Dendritic cell treated with granulocyte-macrophage colony-stimulating factor and Interleukin-4, amounts not matched to agents 40 ng/mL and 50 ng/mL, for 4 days (primary cell): ENCODE measurements at regions of chr13 and their contacts with region 1.

Region 1: GRCh38 chr13:20337884-20338551 is 105.9 kb upstream of the GJB6 start:
- H3K4me3 Mint-ChIP-seq: peak overlapping the region; percentile 20
- H3K27ac Mint-ChIP-seq: peak overlapping the region; percentile 59
- H3K4me1 Mint-ChIP-seq: peaks cover 51% of the 10 kb centered on the region
- H3K27me3 Mint-ChIP-seq: peaks cover 13% of the 10 kb centered on the region

Region 2: DNA sequence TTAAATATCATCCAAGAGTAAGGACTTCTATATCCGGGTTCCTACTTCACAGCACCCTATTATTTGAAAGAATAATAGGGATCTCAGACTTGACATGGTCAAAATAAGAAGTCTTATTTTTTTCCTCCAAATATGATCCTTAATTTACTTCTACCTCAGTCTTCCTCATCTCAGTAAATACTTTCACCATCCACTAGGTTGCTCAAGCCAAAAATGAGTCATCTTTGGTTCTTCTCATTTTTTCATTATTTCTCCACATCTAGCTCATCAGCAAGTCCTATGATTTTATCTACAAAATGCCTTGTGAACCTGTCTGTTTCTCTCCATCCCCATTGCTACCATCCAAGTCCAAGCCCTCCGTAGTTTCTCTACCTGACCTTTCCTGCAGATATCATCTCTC is 16.0 kb after region 1 on chr13:
- intact Hi-C with region 1: loop called (anchors 2 kb)
- H3K4me3 Mint-ChIP-seq: no peak overlapping the region
- H3K27ac Mint-ChIP-seq: no peak overlapping the region
- H3K4me1 Mint-ChIP-seq: peaks cover 49% of the 10 kb centered on the region
- H3K27me3 Mint-ChIP-seq: no peaks in the 10 kb centered on the region